ENCODE measurements at regions of chr11 and their contacts with region 1.

Region 1: DNA sequence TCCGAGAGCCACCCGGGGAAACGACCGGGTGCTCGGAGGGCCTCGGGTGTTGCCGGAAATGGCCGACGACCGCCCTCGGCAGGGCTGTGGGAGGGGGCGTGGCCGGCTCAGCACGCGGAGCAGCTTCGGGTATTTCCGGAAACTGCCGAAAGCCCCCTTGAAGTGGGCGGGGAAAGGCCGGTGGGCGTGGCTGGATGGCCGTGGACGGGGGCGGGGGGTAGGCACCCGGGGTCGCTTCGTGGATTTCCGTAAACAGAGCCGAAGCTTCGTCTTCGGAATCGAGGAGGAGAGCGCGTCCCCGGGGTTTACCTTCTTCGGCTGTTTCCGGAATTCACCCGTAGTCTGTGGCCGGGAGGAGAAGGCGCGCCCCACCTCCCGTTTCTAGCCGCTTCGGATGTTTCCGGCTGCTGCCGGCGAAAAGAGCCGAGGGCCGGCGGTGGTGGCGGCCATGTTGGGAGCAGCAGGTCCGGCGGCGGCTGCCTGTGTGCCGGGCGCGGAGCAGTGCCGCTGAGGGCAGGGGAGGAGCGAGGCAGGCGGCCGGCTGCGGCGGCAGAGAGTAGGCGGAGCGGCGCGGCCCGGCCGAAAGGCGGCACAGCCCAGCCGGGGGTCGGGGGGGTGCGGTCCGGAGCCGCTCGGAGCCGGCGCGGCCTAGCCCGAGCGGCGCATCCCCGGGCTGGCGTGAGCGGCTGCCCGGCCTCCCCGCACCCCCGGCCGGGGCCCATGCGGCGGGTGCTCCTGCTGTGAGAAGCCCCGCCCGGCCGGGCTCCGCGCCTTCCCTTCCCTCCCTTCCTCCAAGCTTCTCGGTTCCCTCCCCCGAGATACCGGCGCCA is at the start of gene MARK2:
- DNase-seq: peak; percentile 98 to 100
- H3K4me3 ChIP-seq: peak within 1 kb of the TSS; percentile 93
- H3K4me3 Mint-ChIP-seq: peak within 1 kb of the TSS; percentile 94
- H3K27ac Mint-ChIP-seq: peak within 1 kb of the TSS; percentile 76
- H3K4me1 ChIP-seq: peaks cover 40% of the 10 kb centered on the region
- H3K4me1 Mint-ChIP-seq: peaks cover 45% of the 10 kb centered on the region
- H3K27me3 ChIP-seq: no peaks in the 10 kb centered on the region
- H3K27me3 Mint-ChIP-seq: no peaks in the 10 kb centered on the region
- CTCF ChIP-seq: no peak
- total RNA-seq, gene MARK2: 63.5 and 64.5 TPM in 2 replicates

Region 2: DNA sequence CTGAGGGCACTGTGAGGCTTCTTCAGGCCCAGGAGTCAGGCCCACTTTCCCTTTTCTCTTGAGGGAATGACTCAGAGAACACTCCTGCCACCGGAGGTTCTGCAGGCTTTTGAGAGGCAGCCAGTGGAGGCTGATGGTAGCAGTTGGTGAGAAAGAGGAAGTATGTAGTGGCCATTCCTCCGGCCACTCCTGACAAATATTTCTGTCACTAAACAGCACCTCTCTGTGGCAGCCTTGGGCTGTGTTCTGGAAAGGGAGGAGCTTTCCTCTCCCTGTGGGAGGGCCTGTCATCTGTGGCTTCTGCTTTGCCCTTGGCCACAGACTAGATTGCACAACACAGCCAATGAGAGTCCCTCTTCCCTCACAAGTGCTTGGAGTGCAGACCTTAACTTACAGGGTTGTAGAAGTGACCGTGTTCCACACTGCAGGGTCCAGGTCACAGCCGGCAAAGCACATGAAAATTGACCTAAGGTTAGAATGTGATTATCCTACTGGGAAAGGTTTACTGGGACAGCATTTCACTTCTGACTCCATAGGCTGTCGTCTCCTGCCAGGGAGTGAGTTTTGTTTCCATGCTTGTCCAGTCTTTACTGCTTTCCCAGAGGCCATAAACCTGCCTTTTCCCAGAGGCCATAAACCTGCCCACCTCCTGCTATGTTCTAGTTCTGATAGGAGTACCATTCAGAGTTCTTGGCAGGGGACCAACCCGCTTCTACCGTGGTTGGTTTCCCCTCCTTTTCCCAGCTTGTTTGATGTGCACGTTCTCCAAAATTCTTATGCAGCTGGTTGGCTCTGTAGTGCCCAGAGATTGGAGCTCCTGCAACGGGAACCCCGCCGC is 33.3 kb after region 1 on chr11:
- CTCF ChIA-PET with region 1: interaction called, 32 read pairs
- POLR2A ChIA-PET with region 1: interaction called, 4 read pairs
- intact Hi-C with region 1: loop called (anchors 1 kb)
- DNase-seq: peak; percentile 88 to 91
- H3K4me3 ChIP-seq: no peak overlapping the region
- H3K4me3 Mint-ChIP-seq: peak overlapping the region; percentile 31
- H3K27ac Mint-ChIP-seq: no peak overlapping the region
- H3K4me1 ChIP-seq: peaks cover 8% of the 10 kb centered on the region
- H3K4me1 Mint-ChIP-seq: peaks cover 25% of the 10 kb centered on the region
- H3K27me3 ChIP-seq: no peaks in the 10 kb centered on the region
- H3K27me3 Mint-ChIP-seq: no peaks in the 10 kb centered on the region
- CTCF ChIP-seq: peak; percentile 38 to 69

Region 3: DNA sequence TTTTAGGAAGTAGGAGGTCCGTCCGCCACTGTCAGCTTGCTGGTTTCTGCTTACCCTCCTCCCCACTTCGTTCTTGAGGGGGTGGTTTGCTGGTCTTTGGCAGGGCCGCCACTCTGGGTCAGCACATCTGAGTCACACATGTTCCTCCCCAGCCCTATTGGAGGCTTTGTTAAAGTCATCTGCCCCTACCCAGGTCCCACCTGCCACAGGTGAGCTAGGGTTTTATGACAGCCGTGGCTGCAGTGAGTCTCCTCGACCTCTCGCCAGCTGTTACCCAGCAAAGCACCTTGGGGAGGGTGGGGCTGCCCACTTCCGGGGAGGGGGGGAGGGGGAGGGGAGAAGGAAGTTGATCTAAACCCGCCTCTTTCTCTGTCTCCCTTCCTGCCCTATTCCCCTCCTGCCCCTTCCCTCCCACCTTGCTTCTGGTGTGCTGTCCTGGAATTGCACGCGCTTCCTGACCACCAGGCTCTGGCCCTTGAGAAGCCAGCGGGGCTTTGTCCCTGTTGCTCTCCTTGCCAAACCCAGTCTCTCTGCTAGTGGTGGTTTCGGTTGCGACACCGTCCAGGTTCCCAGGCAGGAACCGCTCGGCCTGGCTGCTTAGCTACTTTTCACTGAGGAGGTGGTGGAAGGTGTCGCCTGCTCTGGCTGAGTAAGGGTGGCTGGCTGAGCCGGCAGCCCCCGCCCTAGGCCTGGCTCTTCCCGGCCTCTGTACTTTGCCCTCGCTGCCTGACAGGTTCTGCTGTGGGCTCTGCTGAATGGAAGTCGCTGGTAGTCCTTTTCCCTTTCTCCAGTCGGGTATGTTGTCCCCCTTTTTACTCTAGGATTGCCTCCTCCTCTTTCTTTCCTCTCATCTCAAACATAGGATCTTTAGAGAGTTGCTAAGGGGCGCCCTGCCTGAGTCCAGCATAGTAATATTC is 49.5 kb after region 1 on chr11:
- CTCF ChIA-PET with region 1: interaction called, 5 read pairs
- POLR2A ChIA-PET with region 1: interaction called, 8 read pairs
- intact Hi-C with region 1: loop called (anchors 1 kb)
- DNase-seq: peak; percentile 87 to 92
- H3K4me3 ChIP-seq: peak overlapping the region; percentile 56
- H3K4me3 Mint-ChIP-seq: peak overlapping the region; percentile 95
- H3K27ac Mint-ChIP-seq: peak overlapping the region; percentile 98
- H3K4me1 ChIP-seq: peaks cover 33% of the 10 kb centered on the region
- H3K4me1 Mint-ChIP-seq: peaks cover 34% of the 10 kb centered on the region
- H3K27me3 ChIP-seq: no peaks in the 10 kb centered on the region
- H3K27me3 Mint-ChIP-seq: no peaks in the 10 kb centered on the region
- CTCF ChIP-seq: no peak

Region 4: GRCh38 chr11:63938479-63939396 is 99.8 kb after region 1 on chr11 and contains the start of gene NAA40:
- CTCF ChIA-PET with region 1: interaction called, 7 read pairs
- POLR2A ChIA-PET with region 1: interaction called, 8 read pairs
- intact Hi-C with region 1: loop called (anchors 1 kb)
- DNase-seq: peak; percentile 97 to 98
- H3K4me3 ChIP-seq: peak within 1 kb of the TSS; percentile 61
- H3K4me3 Mint-ChIP-seq: peak within 1 kb of the TSS; percentile 100
- H3K27ac Mint-ChIP-seq: peak within 1 kb of the TSS; percentile 98
- H3K4me1 ChIP-seq: no peaks in the 10 kb centered on the region
- H3K4me1 Mint-ChIP-seq: peaks cover 13% of the 10 kb centered on the region
- H3K27me3 ChIP-seq: no peaks in the 10 kb centered on the region
- H3K27me3 Mint-ChIP-seq: no peaks in the 10 kb centered on the region
- CTCF ChIP-seq: no peak
- total RNA-seq, gene NAA40: 42.7 and 43.7 TPM in 2 replicates

Region 5: DNA sequence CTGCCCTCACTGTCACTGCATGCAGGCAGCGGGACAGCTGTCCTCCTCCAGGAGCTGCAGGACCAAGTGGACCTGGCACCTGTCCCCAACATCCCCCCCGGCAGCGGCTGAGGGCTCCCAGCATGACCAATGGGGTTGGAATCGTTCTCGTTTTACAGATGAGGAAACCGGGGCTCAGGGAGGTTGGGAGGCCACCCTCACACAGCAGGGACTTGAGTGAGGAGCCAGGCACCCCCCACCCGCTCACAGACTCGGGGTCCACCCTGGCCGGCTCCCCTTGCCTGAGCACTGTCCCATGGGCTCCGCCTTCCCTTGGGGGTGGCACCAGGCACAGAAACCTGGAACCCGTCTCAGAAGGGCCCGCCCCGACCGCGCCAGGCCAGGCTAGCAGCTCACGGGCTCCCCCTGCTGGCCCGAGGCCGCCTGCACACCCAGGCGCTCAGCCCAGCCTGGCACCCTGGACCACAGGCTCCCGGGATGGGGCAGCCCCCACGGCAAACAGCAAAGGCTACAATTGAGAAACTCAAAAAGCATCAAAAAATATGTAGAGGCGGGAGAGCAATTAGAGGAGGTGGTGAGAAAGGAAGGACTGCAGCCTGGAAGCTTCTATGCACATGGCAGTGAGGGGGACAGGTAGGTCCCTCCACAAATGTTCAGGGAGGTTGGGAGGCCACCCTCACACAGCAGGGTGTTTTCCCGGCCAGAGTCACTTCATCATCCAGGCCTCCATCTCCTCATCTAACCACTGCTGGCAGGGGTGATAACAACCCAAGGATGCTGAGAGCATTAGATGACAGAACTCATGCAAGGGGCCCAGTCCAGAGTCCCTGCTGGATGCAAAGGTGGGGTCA is 314.2 kb after region 1 on chr11:
- CTCF ChIA-PET with region 1: interaction called, 3 read pairs
- POLR2A ChIA-PET with region 1: no interaction called
- intact Hi-C with region 1: loop called (anchors 5 kb)
- DNase-seq: peak in 1 of 2 experiments; percentile 82
- H3K4me3 ChIP-seq: no peak overlapping the region
- H3K4me3 Mint-ChIP-seq: no peak overlapping the region
- H3K27ac Mint-ChIP-seq: no peak overlapping the region
- H3K4me1 ChIP-seq: no peaks in the 10 kb centered on the region
- H3K4me1 Mint-ChIP-seq: peaks cover 11% of the 10 kb centered on the region
- H3K27me3 ChIP-seq: no peaks in the 10 kb centered on the region
- H3K27me3 Mint-ChIP-seq: no peaks in the 10 kb centered on the region
- CTCF ChIP-seq: peak; percentile 98 to 99